Caco-2 (cell line): ENCODE measurements at regions of chr7 and their contacts with region 1.

Region 1: GRCh38 chr7:154927624-154928143 is 75.2 kb downstream of the PAXIP1 start:
- DNase-seq: peak; percentile 76 to 77
- H3K4me3 ChIP-seq: peak overlapping the region; percentile 38
- H3K4me3 Mint-ChIP-seq: peak overlapping the region; percentile 87
- H3K27ac Mint-ChIP-seq: peak overlapping the region; percentile 70
- H3K4me1 ChIP-seq: no peaks in the 10 kb centered on the region
- H3K4me1 Mint-ChIP-seq: no peaks in the 10 kb centered on the region
- H3K27me3 ChIP-seq: no peaks in the 10 kb centered on the region
- H3K27me3 Mint-ChIP-seq: no peaks in the 10 kb centered on the region
- CTCF ChIP-seq: peak; percentile 61 to 79

Region 2: GRCh38 chr7:154913638-154914312 is 13.9 kb before region 1 on chr7:
- CTCF ChIA-PET with region 1: interaction called, 4 read pairs
- POLR2A ChIA-PET with region 1: no interaction called
- intact Hi-C with region 1: loop called (anchors 1 kb)
- DNase-seq: peak; percentile 83 to 90
- H3K4me3 ChIP-seq: no peak overlapping the region
- H3K4me3 Mint-ChIP-seq: no peak overlapping the region
- H3K27ac Mint-ChIP-seq: no peak overlapping the region
- H3K4me1 ChIP-seq: no peaks in the 10 kb centered on the region
- H3K4me1 Mint-ChIP-seq: no peaks in the 10 kb centered on the region
- H3K27me3 ChIP-seq: no peaks in the 10 kb centered on the region
- H3K27me3 Mint-ChIP-seq: no peaks in the 10 kb centered on the region
- CTCF ChIP-seq: peak; percentile 86 to 90

Region 3: DNA sequence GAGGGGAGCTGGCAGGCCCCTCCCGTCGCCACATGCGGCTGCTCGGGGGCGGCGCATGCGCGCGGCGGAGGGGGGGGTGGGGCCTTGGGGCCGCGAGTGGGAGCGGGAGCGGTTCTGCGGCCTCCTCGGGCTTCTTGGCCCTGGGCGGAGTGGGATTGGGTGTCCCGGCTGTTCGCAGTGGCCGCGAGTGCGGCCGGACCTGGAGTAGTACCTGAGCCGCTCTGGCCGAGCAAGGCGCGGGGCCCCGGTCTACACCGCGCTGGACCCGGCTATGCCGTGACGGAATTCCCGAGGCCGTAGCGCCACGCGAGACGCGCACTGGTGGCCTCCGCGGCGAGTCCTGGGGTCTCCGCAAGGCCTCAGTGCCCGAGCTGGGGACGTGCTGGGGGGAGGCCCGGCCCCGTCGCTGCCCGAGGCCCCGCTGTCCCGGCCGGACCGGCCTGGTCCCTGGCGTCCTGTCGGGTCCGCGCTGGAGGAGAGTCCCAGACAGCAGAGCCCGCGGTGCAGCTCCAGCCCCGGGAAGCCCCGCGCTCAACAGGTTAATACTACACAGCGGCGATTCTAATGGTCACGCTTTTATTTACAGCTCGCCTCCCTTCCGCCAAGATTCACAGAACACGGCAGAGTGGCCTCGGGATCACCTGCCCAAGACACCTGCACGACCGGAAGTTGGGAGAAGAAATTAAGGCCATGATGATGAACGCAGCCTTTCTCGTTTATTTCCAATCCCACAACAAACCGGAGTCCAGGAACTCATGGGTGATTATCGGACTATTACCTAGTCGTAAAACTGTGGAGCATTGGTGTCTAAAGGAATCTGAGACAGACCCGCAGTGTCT is 75.9 kb after region 1 on chr7:
- CTCF ChIA-PET with region 1: interaction called, 9 read pairs
- POLR2A ChIA-PET with region 1: no interaction called
- intact Hi-C with region 1: loop called (anchors 1 kb)
- DNase-seq: peak; percentile 86 to 90
- H3K4me3 ChIP-seq: peak overlapping the region; percentile 99
- H3K4me3 Mint-ChIP-seq: peak overlapping the region; percentile 90
- H3K27ac Mint-ChIP-seq: peak overlapping the region; percentile 93
- H3K4me1 ChIP-seq: 0 out of 2 replicates have a peak, but pooled peaks cover 5% of the 10 kb centered on the region
- H3K4me1 Mint-ChIP-seq: no peaks in the 10 kb centered on the region
- H3K27me3 ChIP-seq: no peaks in the 10 kb centered on the region
- H3K27me3 Mint-ChIP-seq: no peaks in the 10 kb centered on the region
- CTCF ChIP-seq: no peak

Region 4: DNA sequence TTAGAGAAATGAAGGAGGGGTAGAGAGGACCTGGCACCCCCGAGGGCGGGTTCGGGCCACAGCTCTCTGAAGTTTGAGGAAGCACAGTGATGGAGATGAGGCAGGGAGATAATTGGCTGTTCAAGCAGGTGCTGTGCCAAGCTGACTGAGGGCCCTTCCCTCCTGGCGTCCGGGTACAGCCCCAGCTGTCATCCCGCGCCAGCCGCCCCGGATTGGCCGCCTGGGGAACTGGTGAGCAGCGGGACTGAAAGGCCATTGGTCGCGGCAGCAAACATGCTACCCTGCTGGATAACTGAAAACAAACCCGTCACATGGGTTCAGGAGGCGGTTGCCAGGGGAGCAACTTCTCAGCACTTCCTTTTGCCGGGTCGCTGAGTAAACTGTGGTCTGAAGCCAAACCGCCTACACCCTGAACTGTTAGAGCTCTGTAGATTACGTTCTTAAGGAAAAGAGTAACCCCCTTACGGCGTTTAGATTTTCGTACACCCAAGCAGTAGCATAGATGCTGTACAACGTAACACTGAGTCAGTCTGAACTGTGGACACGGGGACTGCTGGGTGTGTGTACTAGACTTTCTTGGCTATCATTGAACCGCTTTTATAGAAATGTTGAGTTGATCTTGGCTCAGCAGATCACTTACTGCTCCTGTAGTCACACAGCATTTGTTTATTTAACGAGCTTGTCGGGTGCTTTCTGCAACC is 371.3 kb after region 1 on chr7:
- CTCF ChIA-PET with region 1: no interaction called
- POLR2A ChIA-PET with region 1: no interaction called
- intact Hi-C with region 1: loop called (anchors 5 kb)
- DNase-seq: peak; percentile 84 to 88
- H3K4me3 ChIP-seq: peak overlapping the region; percentile 83
- H3K4me3 Mint-ChIP-seq: peak overlapping the region; percentile 96
- H3K27ac Mint-ChIP-seq: peak overlapping the region; percentile 37
- H3K4me1 ChIP-seq: peaks cover 20% of the 10 kb centered on the region
- H3K4me1 Mint-ChIP-seq: peaks cover 14% of the 10 kb centered on the region
- H3K27me3 ChIP-seq: no peaks in the 10 kb centered on the region
- H3K27me3 Mint-ChIP-seq: no peaks in the 10 kb centered on the region
- CTCF ChIP-seq: no peak

Region 5: DNA sequence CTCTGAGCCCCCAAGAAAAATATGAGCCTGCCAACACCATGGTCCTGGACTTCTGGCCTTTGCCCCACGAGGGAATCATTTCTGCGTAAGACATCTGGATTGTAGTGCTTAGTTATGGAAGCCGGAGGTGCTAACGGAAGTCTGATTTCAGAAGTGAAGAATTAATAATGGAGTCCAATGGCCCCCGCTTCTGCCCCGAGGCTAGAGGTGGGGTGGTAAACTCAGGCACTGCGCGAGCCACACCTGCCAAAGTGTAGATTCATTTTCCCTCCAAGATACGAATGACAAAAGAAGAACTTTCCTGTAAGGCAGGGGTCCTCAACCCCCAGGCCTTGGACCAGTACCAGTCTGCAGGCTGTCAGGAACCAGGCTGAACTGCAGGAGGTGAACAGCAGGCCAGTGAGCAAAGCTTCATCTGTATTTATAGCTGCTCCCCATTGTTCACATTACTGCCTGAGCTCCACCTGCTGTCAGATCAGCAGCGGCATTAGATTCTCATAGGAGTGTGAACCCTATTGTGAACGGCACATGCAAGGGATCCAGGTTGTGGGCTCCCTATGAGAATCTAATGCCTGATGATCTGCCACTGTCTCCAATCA is 596.4 kb after region 1 on chr7:
- CTCF ChIA-PET with region 1: no interaction called
- POLR2A ChIA-PET with region 1: no interaction called
- intact Hi-C with region 1: loop called (anchors 10 kb)
- DNase-seq: no peak
- H3K4me3 ChIP-seq: no peak overlapping the region
- H3K4me3 Mint-ChIP-seq: no peak overlapping the region
- H3K27ac Mint-ChIP-seq: no peak overlapping the region
- H3K4me1 ChIP-seq: no peaks in the 10 kb centered on the region
- H3K4me1 Mint-ChIP-seq: no peaks in the 10 kb centered on the region
- H3K27me3 ChIP-seq: no peaks in the 10 kb centered on the region
- H3K27me3 Mint-ChIP-seq: peaks cover 2% of the 10 kb centered on the region
- CTCF ChIP-seq: no peak